Colonic mucosa (tissue), 4 donors: ENCODE measurements at regions of chr16 and their contacts with region 1.

Region 1: DNA sequence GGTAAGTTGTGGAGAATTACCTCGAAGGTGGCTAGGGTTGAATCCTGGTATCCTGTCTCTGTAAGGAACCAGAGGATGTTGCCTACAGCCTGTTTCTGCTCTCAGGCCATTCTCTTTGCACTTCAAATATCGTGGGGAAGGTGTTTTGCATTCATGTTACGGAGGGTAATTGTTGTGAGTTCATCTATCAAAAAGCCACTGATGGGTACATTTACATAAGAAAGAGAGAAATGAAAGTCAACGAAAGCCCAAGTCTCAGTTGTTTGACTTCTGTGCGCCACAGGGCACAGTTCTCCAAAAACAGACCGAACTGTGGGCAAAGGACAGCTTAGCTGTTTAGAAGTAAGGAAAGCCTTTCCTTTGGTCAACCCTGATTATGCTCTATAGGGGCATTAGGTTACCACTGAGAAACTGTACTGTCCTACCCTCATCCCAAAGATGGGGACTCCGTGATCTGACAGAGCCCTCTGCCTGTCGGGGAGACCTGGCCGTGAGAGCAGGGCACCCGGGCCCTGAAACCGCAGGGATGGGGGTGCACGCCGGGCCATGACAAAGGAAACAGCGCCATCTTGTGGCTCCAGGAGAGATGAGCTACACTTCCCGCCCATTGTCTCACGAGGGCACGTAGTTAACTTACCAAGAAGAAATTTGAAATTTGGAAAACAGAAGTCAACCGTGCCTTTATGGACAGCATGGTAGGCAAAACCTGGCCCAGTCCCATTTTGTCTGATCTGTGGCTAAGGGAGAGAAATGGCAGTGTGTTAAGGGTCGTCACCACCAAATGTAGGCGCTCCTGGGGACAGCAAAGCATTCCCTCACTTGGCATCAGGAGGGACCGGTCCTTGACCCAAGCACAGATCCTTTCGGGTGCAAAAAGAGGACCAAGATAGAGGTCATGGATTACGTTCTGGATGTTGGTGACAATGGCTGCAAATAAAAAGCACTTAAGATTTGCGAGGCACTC is 74.5 kb upstream of the DYNLRB2 start:
- DNase-seq: peak; percentile 61
- H3K4me3 ChIP-seq: no peak overlapping the region
- H3K27ac ChIP-seq: no peak overlapping the region
- H3K4me1 ChIP-seq: no peaks in the 10 kb centered on the region
- H3K27me3 ChIP-seq: no peaks in the 10 kb centered on the region
- CTCF ChIP-seq: peak; percentile 84

Region 2: DNA sequence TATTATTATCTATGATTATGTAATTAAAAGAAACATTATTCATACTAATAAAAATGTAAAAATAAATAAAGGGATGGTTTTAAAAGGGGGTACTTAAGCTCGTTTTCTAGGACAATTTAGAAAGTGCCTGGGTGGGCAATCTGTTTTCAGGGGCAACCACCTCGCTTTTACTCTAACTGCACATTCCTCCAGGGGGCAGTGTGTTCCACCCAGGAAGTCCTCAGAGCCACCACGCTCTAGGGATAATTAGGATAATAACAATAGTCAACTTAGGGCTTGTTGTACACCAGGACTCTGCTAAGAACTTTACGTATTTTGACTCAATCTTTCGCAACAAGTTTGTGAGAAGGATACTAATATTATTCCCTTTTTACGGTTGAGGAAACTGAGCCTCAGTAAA is 469.0 kb before region 1 on chr16:
- intact Hi-C with region 1: loop called (anchors 10 kb)
- DNase-seq: no peak
- H3K4me3 ChIP-seq: no peak overlapping the region
- H3K27ac ChIP-seq: no peak overlapping the region
- H3K4me1 ChIP-seq: no peaks in the 10 kb centered on the region
- H3K27me3 ChIP-seq: no peaks in the 10 kb centered on the region
- CTCF ChIP-seq: no peak

Region 3: GRCh38 chr16:80058214-80058613 is 408.1 kb before region 1 on chr16:
- intact Hi-C with region 1: no loop called
- DNase-seq: peak; percentile 47
- H3K4me3 ChIP-seq: no peak overlapping the region
- H3K27ac ChIP-seq: no peak overlapping the region
- H3K4me1 ChIP-seq: no peaks in the 10 kb centered on the region
- H3K27me3 ChIP-seq: no peaks in the 10 kb centered on the region
- CTCF ChIP-seq: no peak

Region 4: GRCh38 chr16:80303691-80304090 is 162.6 kb before region 1 on chr16:
- intact Hi-C with region 1: no loop called
- DNase-seq: no peak
- H3K4me3 ChIP-seq: no peak overlapping the region
- H3K27ac ChIP-seq: no peak overlapping the region
- H3K4me1 ChIP-seq: no peaks in the 10 kb centered on the region
- H3K27me3 ChIP-seq: no peaks in the 10 kb centered on the region
- CTCF ChIP-seq: no peak